WTC11 (cell line): ENCODE measurements at regions of chr6 and their contacts with region 1.

Region 1: GRCh38 chr6:126743076-126743475 is 375.4 kb upstream of the RSPO3 start:
- DNase-seq: no peak
- ATAC-seq: no peak
- H3K4me3 Mint-ChIP-seq: no peak overlapping the region
- H3K27ac Mint-ChIP-seq: peak overlapping the region; percentile 55; the same call in 1 of the 2 replicates
- H3K4me1 Mint-ChIP-seq: no peaks in the 10 kb centered on the region
- H3K27me3 Mint-ChIP-seq: no peaks in the 10 kb centered on the region
- CTCF ChIP-seq: no peak

Region 2: DNA sequence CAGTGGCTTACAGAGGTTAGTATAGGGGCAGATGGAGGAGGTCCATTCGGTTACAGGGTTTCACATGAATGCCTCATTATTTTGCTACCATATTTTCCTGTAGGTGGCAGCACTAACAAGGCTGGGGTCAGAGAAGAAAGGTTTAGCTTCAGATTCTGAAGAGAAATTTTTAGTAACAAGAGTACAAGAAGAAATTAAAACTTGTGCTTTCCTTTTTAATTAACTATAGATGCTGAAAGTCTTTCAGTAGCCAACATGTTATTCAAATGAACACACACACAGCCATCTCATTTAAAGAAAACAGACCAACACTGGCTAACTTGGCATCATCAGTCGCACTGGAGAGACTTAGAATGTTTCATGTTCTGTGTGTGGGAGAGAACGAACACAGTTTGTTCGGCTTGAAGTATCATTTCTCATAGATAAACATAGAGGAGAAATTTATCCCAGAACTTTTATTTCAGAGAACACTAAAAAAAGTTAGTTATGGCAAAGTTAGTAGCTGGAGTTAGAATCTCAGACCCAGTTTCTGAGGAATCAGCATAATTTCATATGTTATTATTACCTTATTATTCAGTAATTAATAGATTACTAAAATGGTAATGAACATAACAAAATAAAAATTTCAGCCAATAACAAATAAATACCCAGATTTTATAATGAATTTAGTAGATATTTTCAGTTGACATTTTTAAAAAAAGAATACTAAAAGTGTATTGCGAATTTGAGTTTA is 61.4 kb after region 1 on chr6:
- CTCF ChIA-PET with region 1: no interaction called
- POLR2A ChIA-PET with region 1: interaction called, 13 read pairs
- DNase-seq: no peak
- ATAC-seq: peak; percentile 93
- H3K4me3 Mint-ChIP-seq: no peak overlapping the region
- H3K27ac Mint-ChIP-seq: no peak overlapping the region
- H3K4me1 Mint-ChIP-seq: no peaks in the 10 kb centered on the region
- H3K27me3 Mint-ChIP-seq: no peaks in the 10 kb centered on the region
- CTCF ChIP-seq: peak; percentile 55